Right ventricle myocardium inferior (tissue), 1 donor: ENCODE measurements at regions of chr5 and their contacts with region 1.

Region 1: GRCh38 chr5:54725391-54726280 is 208.1 kb downstream of the SNX18 start:
- DNase-seq: no peak
- ATAC-seq: no peak

Region 2: DNA sequence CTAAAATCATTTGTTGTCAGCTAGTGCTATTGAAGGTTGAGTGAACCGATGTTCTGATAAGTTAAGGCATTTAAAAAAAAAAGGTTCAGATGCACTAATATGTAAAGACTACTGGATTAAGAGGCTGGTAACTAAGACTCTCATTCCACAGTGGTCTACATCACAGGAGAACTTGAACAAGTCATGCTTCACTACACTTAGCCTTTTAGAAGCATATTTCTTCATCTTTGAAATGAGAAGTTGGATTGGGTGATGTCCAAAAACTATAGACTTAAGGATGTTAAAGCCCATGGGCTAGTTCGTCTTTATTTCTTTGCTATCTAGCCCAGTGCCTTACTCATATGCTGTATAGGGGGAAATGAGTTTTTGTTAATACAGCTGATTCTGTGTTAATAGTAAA is 1058.0 kb before region 1 on chr5:
- intact Hi-C with region 1: no loop called
- DNase-seq: no peak
- ATAC-seq: no peak

Region 3: DNA sequence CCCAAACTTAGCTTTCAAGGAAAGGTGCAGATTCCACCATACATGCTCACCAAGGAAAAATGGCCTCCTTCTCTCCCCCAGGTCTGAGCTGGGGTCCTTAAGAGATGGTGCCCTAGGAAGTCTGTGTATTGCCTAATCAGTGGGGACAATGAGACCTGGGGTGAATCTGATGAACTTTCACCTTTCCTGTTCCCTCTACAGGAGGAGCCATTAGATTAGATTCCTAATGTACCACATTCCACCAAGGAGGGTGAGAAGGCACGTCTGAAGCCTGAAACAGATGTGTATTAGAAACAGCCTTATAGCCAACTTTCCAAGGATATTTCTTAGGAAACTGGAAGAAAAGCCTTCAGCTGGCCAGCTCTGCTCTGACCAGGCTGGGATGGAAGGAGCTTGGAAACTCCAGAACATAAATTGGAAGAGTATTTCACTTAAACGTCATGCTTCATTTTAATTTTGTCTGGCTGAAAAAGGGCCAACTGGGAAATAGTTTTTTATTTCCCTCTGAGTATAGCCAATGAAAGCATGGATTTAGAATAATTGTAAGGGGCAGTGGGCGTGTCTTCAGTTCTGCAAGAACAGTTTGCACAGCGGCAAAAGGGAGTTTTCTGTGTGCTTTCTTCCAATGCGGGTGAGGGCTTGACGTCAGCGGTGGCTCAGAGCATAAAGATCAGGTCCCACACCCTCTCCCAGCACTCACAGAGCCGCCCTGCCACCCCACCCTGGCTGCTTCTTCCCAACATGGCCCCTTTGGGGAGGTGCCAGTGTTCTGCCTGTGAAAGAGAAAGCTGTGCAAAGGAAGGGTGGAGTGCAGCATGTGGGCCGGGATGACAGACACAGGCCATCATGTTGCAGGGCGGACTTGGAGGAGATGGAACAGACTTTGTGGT is 48.9 kb after region 1 on chr5:
- intact Hi-C with region 1: loop called (anchors 5 kb)
- DNase-seq: peak; percentile 88
- ATAC-seq: peak; percentile 96